CD8-positive, alpha-beta T cell (primary cell): ENCODE measurements at regions of chr6 and their contacts with region 1.

Region 1: GRCh38 chr6:149431905-149432775 is 32.1 kb downstream of the SUMO4 start:
- DNase-seq: peak; percentile 80 to 94 (median 87)
- ATAC-seq: peak; percentile 97
- H3K4me3 ChIP-seq: no peak overlapping the region
- H3K4me3 Mint-ChIP-seq: peak overlapping the region; percentile 74
- H3K27ac ChIP-seq: no peak overlapping the region
- H3K27ac Mint-ChIP-seq: no peak overlapping the region
- H3K4me1 ChIP-seq: no peaks in the 10 kb centered on the region
- H3K4me1 Mint-ChIP-seq: peaks cover 7% of the 10 kb centered on the region
- H3K27me3 ChIP-seq: no peaks in the 10 kb centered on the region
- H3K27me3 Mint-ChIP-seq: no peaks in the 10 kb centered on the region
- CTCF ChIP-seq: peak; percentile 99

Region 2: GRCh38 chr6:148559848-148560433 is 872.2 kb before region 1 on chr6:
- CTCF ChIA-PET with region 1: no interaction called
- POLR2A ChIA-PET with region 1: no interaction called
- intact Hi-C with region 1: loop called (anchors 5 kb)
- DNase-seq: peak; percentile 44 to 81 (median 69)
- ATAC-seq: peak; percentile 94
- H3K4me3 ChIP-seq: peak overlapping the region in 1 of 2 experiments; percentile 46
- H3K4me3 Mint-ChIP-seq: peak overlapping the region; percentile 35
- H3K27ac ChIP-seq: no peak overlapping the region
- H3K27ac Mint-ChIP-seq: no peak overlapping the region
- H3K4me1 ChIP-seq: peaks cover 11% of the 10 kb centered on the region
- H3K4me1 Mint-ChIP-seq: peaks cover 8% of the 10 kb centered on the region
- H3K27me3 ChIP-seq: no peaks in the 10 kb centered on the region
- H3K27me3 Mint-ChIP-seq: peaks cover 27% of the 10 kb centered on the region
- CTCF ChIP-seq: peak; percentile 98

Region 3: GRCh38 chr6:148980234-148980633 is 451.9 kb before region 1 on chr6:
- CTCF ChIA-PET with region 1: no interaction called
- POLR2A ChIA-PET with region 1: no interaction called
- intact Hi-C with region 1: no loop called
- DNase-seq: no peak
- ATAC-seq: no peak
- H3K4me3 ChIP-seq: no peak overlapping the region
- H3K4me3 Mint-ChIP-seq: no peak overlapping the region
- H3K27ac ChIP-seq: no peak overlapping the region
- H3K27ac Mint-ChIP-seq: no peak overlapping the region
- H3K4me1 ChIP-seq: no peaks in the 10 kb centered on the region
- H3K4me1 Mint-ChIP-seq: no peaks in the 10 kb centered on the region
- H3K27me3 ChIP-seq: no peaks in the 10 kb centered on the region
- H3K27me3 Mint-ChIP-seq: peaks cover 1% of the 10 kb centered on the region
- CTCF ChIP-seq: no peak

Region 4: DNA sequence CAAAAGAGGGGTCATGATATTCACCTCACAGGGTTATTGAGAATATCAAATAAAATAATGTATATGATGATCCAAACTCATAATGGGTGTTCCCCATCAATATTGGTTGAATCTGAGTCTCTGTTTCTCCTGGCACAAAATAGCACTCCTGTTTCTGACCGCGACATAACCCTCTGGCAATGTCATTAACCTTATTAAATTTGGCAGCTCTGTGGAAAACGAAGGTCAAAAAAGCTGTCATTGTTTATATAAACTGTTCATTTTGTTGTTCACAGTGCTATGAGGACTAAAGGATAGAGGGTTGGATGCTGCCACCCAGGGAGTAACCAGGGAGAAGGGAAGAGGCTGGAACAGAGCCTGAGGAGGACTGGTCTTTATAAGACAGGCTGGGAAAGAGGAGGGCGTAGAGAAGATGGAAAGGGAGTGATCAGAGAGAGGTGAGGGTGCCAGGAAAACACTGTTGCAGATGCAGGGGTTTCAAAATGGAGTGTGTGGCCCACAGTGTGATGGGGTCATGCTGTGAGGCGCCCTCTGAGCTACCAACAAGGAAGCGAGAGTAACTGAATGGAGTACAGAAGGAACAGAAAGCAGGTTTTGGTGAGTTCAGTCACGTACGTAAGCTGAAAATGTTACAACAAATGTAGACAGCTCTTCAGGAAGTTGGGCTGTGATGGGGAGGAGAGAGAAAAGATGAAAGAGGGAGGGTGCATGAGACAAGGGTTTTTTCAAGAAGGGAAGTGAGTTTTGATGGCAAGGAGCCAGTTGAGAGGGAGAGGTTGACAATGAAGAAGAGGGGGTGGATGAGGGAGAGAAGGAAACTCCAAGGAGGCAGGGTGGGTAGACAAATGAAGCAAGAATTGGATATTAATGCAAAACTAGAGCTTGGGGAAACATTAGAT is 366.2 kb before region 1 on chr6:
- CTCF ChIA-PET with region 1: interaction called, 16 read pairs
- POLR2A ChIA-PET with region 1: no interaction called
- intact Hi-C with region 1: no loop called
- DNase-seq: peak in 8 of 9 experiments; percentile 11 to 90 (median 54)
- ATAC-seq: peak; percentile 96
- H3K4me3 ChIP-seq: peak overlapping the region in 1 of 2 experiments; percentile 5
- H3K4me3 Mint-ChIP-seq: peak overlapping the region; percentile 44
- H3K27ac ChIP-seq: peak overlapping the region; percentile 51 to 62
- H3K27ac Mint-ChIP-seq: peak overlapping the region; percentile 96
- H3K4me1 ChIP-seq: peaks cover 24% of the 10 kb centered on the region
- H3K4me1 Mint-ChIP-seq: peaks cover 27% of the 10 kb centered on the region
- H3K27me3 ChIP-seq: no peaks in the 10 kb centered on the region
- H3K27me3 Mint-ChIP-seq: no peaks in the 10 kb centered on the region
- CTCF ChIP-seq: no peak

Region 5: GRCh38 chr6:149094156-149094555 is 338.0 kb before region 1 on chr6:
- CTCF ChIA-PET with region 1: interaction called, 108 read pairs
- POLR2A ChIA-PET with region 1: no interaction called
- intact Hi-C with region 1: no loop called
- DNase-seq: no peak
- ATAC-seq: no peak
- H3K4me3 ChIP-seq: no peak overlapping the region
- H3K4me3 Mint-ChIP-seq: peak overlapping the region; percentile 57
- H3K27ac ChIP-seq: no peak overlapping the region
- H3K27ac Mint-ChIP-seq: no peak overlapping the region
- H3K4me1 ChIP-seq: peaks cover 33% of the 10 kb centered on the region
- H3K4me1 Mint-ChIP-seq: peaks cover 38% of the 10 kb centered on the region
- H3K27me3 ChIP-seq: no peaks in the 10 kb centered on the region
- H3K27me3 Mint-ChIP-seq: no peaks in the 10 kb centered on the region
- CTCF ChIP-seq: no peak

Region 6: GRCh38 chr6:149233056-149233715 is 199.0 kb before region 1 on chr6:
- CTCF ChIA-PET with region 1: interaction called, 5 read pairs
- POLR2A ChIA-PET with region 1: interaction called, 3 read pairs
- intact Hi-C with region 1: loop called in 1 of 2 experiments (anchors 5 kb)
- DNase-seq: peak in 7 of 9 experiments; percentile 26 to 65 (median 47)
- ATAC-seq: peak; percentile 54
- H3K4me3 ChIP-seq: peak overlapping the region in 1 of 2 experiments; percentile 17
- H3K4me3 Mint-ChIP-seq: peak overlapping the region; percentile 38
- H3K27ac ChIP-seq: peak overlapping the region; percentile 31 to 45
- H3K27ac Mint-ChIP-seq: peak overlapping the region; percentile 93
- H3K4me1 ChIP-seq: peaks cover 41% of the 10 kb centered on the region
- H3K4me1 Mint-ChIP-seq: peaks cover 43% of the 10 kb centered on the region
- H3K27me3 ChIP-seq: no peaks in the 10 kb centered on the region
- H3K27me3 Mint-ChIP-seq: no peaks in the 10 kb centered on the region
- CTCF ChIP-seq: no peak

Region 7: GRCh38 chr6:149443411-149444181 is 11.5 kb after region 1 on chr6:
- CTCF ChIA-PET with region 1: interaction called, 31 read pairs
- POLR2A ChIA-PET with region 1: no interaction called
- intact Hi-C with region 1: no loop called
- DNase-seq: no peak
- ATAC-seq: no peak
- H3K4me3 ChIP-seq: no peak overlapping the region
- H3K4me3 Mint-ChIP-seq: no peak overlapping the region
- H3K27ac ChIP-seq: no peak overlapping the region
- H3K27ac Mint-ChIP-seq: no peak overlapping the region
- H3K4me1 ChIP-seq: no peaks in the 10 kb centered on the region
- H3K4me1 Mint-ChIP-seq: no peaks in the 10 kb centered on the region
- H3K27me3 ChIP-seq: no peaks in the 10 kb centered on the region
- H3K27me3 Mint-ChIP-seq: no peaks in the 10 kb centered on the region
- CTCF ChIP-seq: no peak

Region 8: GRCh38 chr6:149513915-149514314 is 81.8 kb after region 1 on chr6:
- CTCF ChIA-PET with region 1: interaction called, 26 read pairs
- POLR2A ChIA-PET with region 1: no interaction called
- intact Hi-C with region 1: loop called (anchors 1 kb)
- DNase-seq: no peak
- ATAC-seq: no peak
- H3K4me3 ChIP-seq: no peak overlapping the region
- H3K4me3 Mint-ChIP-seq: no peak overlapping the region
- H3K27ac ChIP-seq: no peak overlapping the region
- H3K27ac Mint-ChIP-seq: no peak overlapping the region
- H3K4me1 ChIP-seq: peaks cover 13% of the 10 kb centered on the region
- H3K4me1 Mint-ChIP-seq: peaks cover 29% of the 10 kb centered on the region
- H3K27me3 ChIP-seq: no peaks in the 10 kb centered on the region
- H3K27me3 Mint-ChIP-seq: no peaks in the 10 kb centered on the region
- CTCF ChIP-seq: no peak